OCI-LY7 (cell line): ENCODE measurements at regions of chr5 and their contacts with region 1.

Region 1: GRCh38 chr5:113663880-113664541 is 150.5 kb downstream of the YTHDC2 start:
- DNase-seq: peak; percentile 37
- H3K4me3 ChIP-seq: no peak overlapping the region
- H3K27ac ChIP-seq: no peak overlapping the region
- H3K4me1 ChIP-seq: no peaks in the 10 kb centered on the region
- CTCF ChIP-seq: peak; percentile 82

Region 2: GRCh38 chr5:113612060-113612496 is 51.9 kb before region 1 on chr5:
- CTCF ChIA-PET with region 1: interaction called, 4 read pairs
- POLR2A ChIA-PET with region 1: interaction called, 3 read pairs
- intact Hi-C with region 1: loop called (anchors 2 kb)
- DNase-seq: peak; percentile 54
- H3K4me3 ChIP-seq: no peak overlapping the region
- H3K27ac ChIP-seq: no peak overlapping the region
- H3K4me1 ChIP-seq: no peaks in the 10 kb centered on the region
- CTCF ChIP-seq: peak; percentile 89

Region 3: DNA sequence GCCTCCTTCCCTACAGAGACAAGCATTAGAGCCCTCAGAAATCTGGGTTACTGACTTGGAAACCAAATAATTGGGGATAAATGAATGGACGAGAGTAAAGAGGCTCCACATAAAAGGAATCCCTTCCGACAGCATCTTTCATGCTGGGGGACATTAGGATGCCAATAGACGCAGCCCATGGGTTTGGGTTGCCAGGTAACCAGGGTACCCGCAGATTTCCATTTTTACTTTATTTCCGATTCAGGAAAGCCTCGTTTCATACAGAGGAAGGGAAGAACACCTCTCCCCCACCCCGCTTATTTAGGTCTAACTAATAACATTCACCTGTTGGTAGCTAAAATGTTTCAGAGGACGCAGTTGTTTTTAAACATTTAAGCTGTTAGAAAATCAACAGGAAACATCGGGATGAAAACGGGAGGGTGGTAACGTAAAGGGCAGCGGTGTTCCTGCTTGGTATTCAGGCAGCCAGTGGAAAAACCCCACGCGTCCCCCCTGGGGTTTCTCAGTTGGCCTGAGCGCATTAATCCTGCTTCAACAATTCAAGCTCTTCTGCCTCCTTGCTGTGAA is 29.0 kb after region 1 on chr5:
- CTCF ChIA-PET with region 1: no interaction called
- POLR2A ChIA-PET with region 1: no interaction called
- intact Hi-C with region 1: no loop called
- DNase-seq: no peak
- H3K4me3 ChIP-seq: no peak overlapping the region
- H3K27ac ChIP-seq: no peak overlapping the region
- H3K4me1 ChIP-seq: no peaks in the 10 kb centered on the region
- CTCF ChIP-seq: no peak